ENCODE measurements at regions of chr7 and their contacts with region 1.

Region 1: DNA sequence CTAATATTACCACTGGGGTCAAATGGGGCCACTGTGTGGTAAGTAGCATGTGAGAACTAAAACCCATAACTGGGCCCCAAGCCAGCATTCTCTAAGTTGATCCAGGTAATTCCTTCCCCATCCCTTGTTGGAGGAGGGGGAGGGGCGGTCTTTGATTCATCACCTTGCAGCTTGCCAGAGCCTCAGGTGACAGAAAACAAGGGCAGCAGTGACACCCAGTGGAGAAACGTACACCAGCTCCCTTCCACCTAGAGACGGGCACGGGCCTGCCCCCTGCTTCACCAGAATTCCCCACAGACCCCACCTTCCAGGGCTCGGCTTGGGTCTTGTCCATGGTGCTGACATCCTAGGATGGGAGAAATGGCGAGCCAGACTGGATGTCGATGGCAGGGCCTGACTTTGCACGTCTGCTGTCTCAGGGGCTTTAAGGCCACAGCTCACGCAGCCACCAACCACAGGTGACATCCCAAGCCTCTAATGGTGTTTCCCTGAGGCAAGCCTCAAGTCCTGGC is 102.0 kb downstream of the STRA8 start:
- DNase-seq: peak; percentile 66 to 77 (median 70)
- ATAC-seq: peak; percentile 94
- H3K4me3 ChIP-seq: no peak overlapping the region
- H3K27ac ChIP-seq: no peak overlapping the region
- H3K4me1 ChIP-seq: no peaks in the 10 kb centered on the region
- H3K27me3 ChIP-seq: peaks cover 8 to 27% of the 10 kb centered on the region in 2 experiments; a peak in 4 of 5 replicates
- CTCF ChIP-seq: peak; percentile 60 to 87 (median 70); a peak in 5 of 6 replicates
- EP300 ChIP-seq: no peak
- POLR2A ChIP-seq: no peak
- RAD21 ChIP-seq: peak; percentile 28 to 73; a peak in 3 of 4 replicates

Region 2: DNA sequence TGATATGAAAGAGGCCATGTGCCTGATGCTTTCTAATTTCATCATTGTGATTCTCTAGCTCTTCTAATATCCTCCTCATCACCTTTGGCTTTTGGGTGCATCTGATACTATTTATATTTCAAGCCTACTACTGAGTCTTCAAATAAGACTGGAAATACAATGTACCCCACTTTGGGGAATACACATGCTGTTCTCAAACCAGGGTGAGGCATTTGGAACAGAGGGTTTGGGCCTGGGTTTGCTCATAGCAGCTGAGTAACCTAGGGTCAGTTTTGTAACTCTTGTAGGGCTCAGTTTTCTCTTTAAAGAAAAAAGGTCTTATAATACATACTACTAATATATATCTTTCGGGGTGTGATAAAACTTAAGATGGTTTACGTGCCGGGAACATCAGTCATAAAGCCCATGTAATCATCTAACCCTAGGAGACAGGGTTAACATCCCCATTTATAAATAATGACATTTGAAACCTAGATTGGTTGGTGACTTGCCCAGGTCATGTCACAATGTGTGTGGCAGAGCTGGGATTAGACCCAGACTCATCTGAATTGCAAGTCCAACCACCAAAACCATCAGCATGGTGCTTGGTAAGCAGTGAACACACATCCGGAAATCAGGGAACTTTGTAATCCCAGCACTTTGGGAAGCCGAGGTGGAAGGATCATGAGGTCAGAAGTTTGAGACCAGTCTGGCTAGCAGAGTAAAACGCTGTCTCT is 763.8 kb before region 1 on chr7:
- CTCF ChIA-PET with region 1: no interaction called
- POLR2A ChIA-PET with region 1: no interaction called
- in situ Hi-C with region 1: no loop called
- intact Hi-C with region 1: no loop called
- DNase-seq: no peak
- ATAC-seq: no peak
- H3K4me3 ChIP-seq: no peak overlapping the region
- H3K27ac ChIP-seq: no peak overlapping the region
- H3K4me1 ChIP-seq: no peaks in the 10 kb centered on the region
- H3K27me3 ChIP-seq: peaks cover 4 to 21% of the 10 kb centered on the region in 2 experiments; a peak in 4 of 5 replicates
- CTCF ChIP-seq: no peak
- EP300 ChIP-seq: no peak
- POLR2A ChIP-seq: no peak
- RAD21 ChIP-seq: no peak

Region 3: DNA sequence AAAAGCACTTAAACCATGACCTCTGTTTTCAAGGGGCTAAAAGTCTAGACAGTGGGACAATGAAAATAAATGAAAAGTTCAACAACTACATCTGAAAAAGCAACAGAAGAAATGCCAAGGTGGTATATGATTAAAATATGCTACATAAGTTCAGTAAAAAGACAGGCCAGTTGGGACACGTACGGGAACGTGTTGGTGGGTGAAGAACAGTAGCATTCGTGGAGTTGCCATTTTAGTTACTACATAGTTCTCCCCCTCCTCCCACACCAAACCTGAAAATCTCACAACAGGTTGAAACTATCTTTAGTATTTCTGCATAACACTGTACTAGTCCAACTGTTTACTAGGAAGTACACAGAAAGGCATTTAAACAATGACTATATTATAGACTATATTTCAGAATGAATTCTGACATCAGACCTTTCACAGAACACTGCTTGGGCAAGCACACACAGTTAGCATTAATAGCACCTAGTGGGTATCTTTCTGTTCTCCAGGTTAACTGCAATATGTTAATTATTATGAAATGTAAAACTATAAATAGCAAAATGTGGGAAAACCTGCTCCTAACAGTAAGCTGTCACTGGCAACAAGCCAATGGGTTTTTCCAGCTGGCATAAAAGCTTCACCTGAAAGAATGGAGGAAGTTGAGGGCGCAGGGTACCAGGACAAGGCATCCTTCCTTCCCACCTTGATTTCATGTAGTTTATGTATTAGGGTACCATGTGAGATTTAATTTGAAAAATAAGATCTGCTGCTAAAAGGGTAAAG is 32.9 kb after region 1 on chr7:
- CTCF ChIA-PET with region 1: no interaction called
- POLR2A ChIA-PET with region 1: no interaction called
- in situ Hi-C with region 1: no loop called
- intact Hi-C with region 1: loop called (anchors 1 kb)
- DNase-seq: no peak
- ATAC-seq: no peak
- H3K4me3 ChIP-seq: no peak overlapping the region
- H3K27ac ChIP-seq: no peak overlapping the region
- H3K4me1 ChIP-seq: no peaks in the 10 kb centered on the region
- H3K27me3 ChIP-seq: no peaks in the 10 kb centered on the region
- CTCF ChIP-seq: no peak
- EP300 ChIP-seq: no peak
- POLR2A ChIP-seq: no peak
- RAD21 ChIP-seq: no peak

Measured in K562 (cell line).